ENCODE measurements at regions of chr21 and their contacts with region 1.

Region 1: DNA sequence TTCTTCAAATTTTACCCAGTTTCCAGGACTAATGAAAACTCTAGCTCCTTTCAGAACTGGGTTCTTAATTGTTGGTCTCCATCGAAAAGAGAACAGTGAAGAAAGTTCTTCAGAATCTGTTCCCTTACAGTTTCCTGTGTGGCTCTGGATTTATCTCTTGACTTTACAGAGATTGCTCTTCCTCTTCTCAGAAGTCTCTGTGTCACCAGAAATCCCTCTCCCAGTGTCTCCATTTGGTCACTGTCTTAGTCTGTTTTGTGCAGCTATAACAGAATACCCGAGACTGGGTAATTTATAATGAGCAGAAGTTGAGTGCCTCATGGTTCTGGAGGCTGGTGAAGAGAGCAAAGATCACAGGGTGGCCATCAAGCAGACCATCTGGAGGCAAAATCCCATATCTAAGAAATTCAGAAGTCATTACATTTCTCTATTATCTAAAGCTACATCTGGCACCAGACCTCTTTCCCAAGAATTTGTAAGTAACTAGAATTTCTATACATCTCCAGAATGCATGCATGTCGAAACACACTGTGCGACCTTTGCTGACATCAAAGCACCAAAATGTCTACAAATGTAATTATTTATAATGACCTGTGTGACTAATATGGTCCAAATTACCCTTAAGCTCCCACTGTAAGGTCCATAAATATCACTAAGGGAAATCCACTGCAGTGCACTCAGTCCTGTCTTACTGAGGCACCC is 65.4 kb upstream of the KRTAP19-8 start:
- H3K4me3 Mint-ChIP-seq: no peak overlapping the region
- H3K27ac Mint-ChIP-seq: peak overlapping the region; percentile 74
- H3K4me1 Mint-ChIP-seq: peaks cover 74% of the 10 kb centered on the region
- H3K27me3 Mint-ChIP-seq: peaks cover 4% of the 10 kb centered on the region

Region 2: DNA sequence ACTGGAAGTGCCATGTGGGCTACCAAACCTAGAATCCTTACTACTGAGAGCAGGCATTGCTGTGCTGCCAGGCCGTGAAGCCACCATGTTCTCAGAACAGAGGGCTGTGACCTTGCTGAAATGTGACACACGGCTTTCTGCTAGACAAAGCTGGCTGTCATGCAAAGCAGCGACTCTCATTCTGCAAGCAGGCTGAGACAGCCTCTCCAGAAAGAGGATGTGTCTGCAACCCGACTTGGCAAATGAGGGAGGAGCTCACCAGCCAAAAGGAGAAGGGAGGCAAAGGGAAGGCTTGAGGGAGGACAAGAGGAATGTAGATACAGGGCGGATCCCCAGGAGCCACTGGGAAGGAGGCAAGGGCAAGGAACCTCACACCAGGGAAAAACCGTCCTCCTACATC is 20.3 kb after region 1 on chr21:
- intact Hi-C with region 1: loop called (anchors 2 kb)
- H3K4me3 Mint-ChIP-seq: peak overlapping the region; percentile 37
- H3K27ac Mint-ChIP-seq: peak overlapping the region; percentile 83
- H3K4me1 Mint-ChIP-seq: peaks cover 29% of the 10 kb centered on the region
- H3K27me3 Mint-ChIP-seq: no peaks in the 10 kb centered on the region

Region 3: GRCh38 chr21:31136891-31137290 is 33.2 kb after region 1 on chr21:
- intact Hi-C with region 1: loop called (anchors 5 kb)
- H3K4me3 Mint-ChIP-seq: no peak overlapping the region
- H3K27ac Mint-ChIP-seq: peak overlapping the region; percentile 68
- H3K4me1 Mint-ChIP-seq: peaks cover 56% of the 10 kb centered on the region
- H3K27me3 Mint-ChIP-seq: no peaks in the 10 kb centered on the region

Region 4: GRCh38 chr21:31343680-31344480 is 240.2 kb after region 1 on chr21 and contains the start of gene TIAM1:
- intact Hi-C with region 1: loop called (anchors 5 kb)
- H3K4me3 Mint-ChIP-seq: peak within 1 kb of the TSS; percentile 100
- H3K27ac Mint-ChIP-seq: peak within 1 kb of the TSS; percentile 99
- H3K4me1 Mint-ChIP-seq: peaks cover 49% of the 10 kb centered on the region
- H3K27me3 Mint-ChIP-seq: peaks cover 5% of the 10 kb centered on the region